SK-N-SH (cell line): ENCODE measurements at regions of chr12 and their contacts with region 1.

Region 1: GRCh38 chr12:51341259-51342007 is 5.0 kb downstream of the CELA1 start:
- DNase-seq: peak; percentile 77
- H3K4me3 ChIP-seq: peak overlapping the region in 1 of 2 experiments; percentile 36; a peak in 1 of 4 replicates
- H3K27ac ChIP-seq: no peak overlapping the region
- H3K4me1 ChIP-seq: peaks cover 4 to 5% of the 10 kb centered on the region in 2 experiments; a peak in 1 of 4 replicates
- H3K27me3 ChIP-seq: no peaks in the 10 kb centered on the region
- CTCF ChIP-seq: peak; percentile 97
- EP300 ChIP-seq: no peak
- RAD21 ChIP-seq: peak; percentile 97

Region 2: GRCh38 chr12:50763639-50764285 is 577.7 kb before region 1 on chr12 and contains the start of gene ATF1:
- CTCF ChIA-PET with region 1: interaction called, 15 read pairs
- POLR2A ChIA-PET with region 1: no interaction called
- DNase-seq: peak; percentile 95
- H3K4me3 ChIP-seq: peak within 1 kb of the TSS; percentile 71 to 73
- H3K27ac ChIP-seq: peak within 1 kb of the TSS; percentile 91 to 93
- H3K4me1 ChIP-seq: peaks cover 8 to 9% of the 10 kb centered on the region in 2 experiments; a peak in 1 of 4 replicates
- H3K27me3 ChIP-seq: no peaks in the 10 kb centered on the region
- CTCF ChIP-seq: no peak
- EP300 ChIP-seq: no peak
- RAD21 ChIP-seq: no peak
- polyA plus RNA-seq, gene ATF1: 25.0 and 34.2 TPM in 2 replicates

Region 3: DNA sequence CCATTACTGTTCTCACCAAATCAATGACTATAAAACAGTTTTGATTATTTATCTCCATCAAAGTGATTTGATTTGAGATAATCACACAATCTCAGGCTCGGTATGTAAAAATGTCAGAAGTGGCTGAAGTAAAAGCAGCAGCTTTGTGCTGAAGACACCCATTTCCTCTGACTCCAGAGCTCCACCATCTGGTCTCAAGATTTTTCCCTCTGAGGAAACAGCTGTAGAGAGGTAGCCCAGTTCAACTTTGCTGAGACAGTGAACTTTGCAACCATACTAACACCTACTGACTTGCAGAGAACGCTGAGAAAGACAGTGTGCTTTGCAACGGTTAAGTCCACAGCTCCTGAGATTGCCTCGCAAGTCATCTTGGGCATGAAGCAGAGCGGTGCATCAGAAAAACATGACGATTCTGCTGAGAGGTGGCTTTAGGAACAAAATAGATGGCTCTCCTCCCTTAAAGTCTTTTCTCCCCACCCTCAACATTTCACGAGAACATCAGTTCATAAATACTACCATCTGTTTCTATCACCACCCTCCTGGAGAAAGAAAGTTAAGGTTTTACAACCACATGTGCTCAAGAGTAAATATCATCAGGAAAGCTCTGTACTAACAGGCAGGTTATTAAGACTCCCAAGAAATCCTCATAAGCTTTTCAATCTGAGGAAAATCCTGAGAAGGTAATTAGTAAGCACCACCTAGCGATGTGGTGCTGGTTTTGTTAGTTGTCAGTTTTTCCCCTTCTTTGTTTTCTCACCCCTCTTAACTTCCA is 354.3 kb before region 1 on chr12:
- CTCF ChIA-PET with region 1: interaction called, 19 read pairs
- POLR2A ChIA-PET with region 1: no interaction called
- DNase-seq: peak; percentile 44
- H3K4me3 ChIP-seq: no peak overlapping the region
- H3K27ac ChIP-seq: no peak overlapping the region
- H3K4me1 ChIP-seq: peaks cover 2 to 11% of the 10 kb centered on the region in 2 experiments; a peak in 1 of 4 replicates
- H3K27me3 ChIP-seq: no peaks in the 10 kb centered on the region
- CTCF ChIP-seq: peak; percentile 68
- EP300 ChIP-seq: no peak
- RAD21 ChIP-seq: peak; percentile 89

Region 4: DNA sequence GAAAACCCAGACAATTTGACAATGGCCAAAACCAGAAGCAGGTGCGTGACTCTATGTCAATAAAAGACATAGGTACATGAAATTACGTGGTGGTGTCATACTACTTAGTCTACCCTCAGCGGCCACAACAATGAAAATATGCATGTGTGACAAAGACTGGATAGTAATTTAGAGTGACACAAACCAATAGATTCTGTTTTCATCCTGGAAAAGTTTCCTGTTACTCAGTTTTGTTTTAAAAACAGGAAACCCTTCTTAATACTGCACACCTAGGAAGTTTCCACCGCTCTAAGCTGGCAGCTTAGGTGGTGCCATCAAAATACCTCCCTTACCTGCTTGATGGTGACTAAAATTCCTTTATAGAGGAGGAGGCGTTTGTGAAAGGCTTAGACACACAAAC is 138.7 kb before region 1 on chr12:
- CTCF ChIA-PET with region 1: no interaction called
- POLR2A ChIA-PET with region 1: no interaction called
- DNase-seq: no peak
- H3K4me3 ChIP-seq: no peak overlapping the region
- H3K27ac ChIP-seq: no peak overlapping the region
- H3K4me1 ChIP-seq: no peaks in the 10 kb centered on the region
- H3K27me3 ChIP-seq: no peaks in the 10 kb centered on the region
- CTCF ChIP-seq: no peak
- EP300 ChIP-seq: no peak
- RAD21 ChIP-seq: no peak

Region 5: GRCh38 chr12:51270067-51270970 is 71.1 kb before region 1 on chr12 and contains the start of gene SMAGP:
- CTCF ChIA-PET with region 1: interaction called, 51 read pairs
- POLR2A ChIA-PET with region 1: no interaction called
- DNase-seq: peak; percentile 81
- H3K4me3 ChIP-seq: peak within 1 kb of the TSS; percentile 60 to 86
- H3K27ac ChIP-seq: peak within 1 kb of the TSS in 1 of 2 experiments; percentile 93; a peak in 2 of 4 replicates
- H3K4me1 ChIP-seq: peaks cover 0 to 2% of the 10 kb centered on the region in 2 experiments; a peak in 1 of 4 replicates
- H3K27me3 ChIP-seq: no peaks in the 10 kb centered on the region
- CTCF ChIP-seq: no peak
- EP300 ChIP-seq: 0 out of 4 replicates have a peak, but pooled peaks of 1 of the 2 experiments have one; percentile 5
- RAD21 ChIP-seq: no peak
- polyA plus RNA-seq, gene SMAGP: 22.6 and 26.3 TPM in 2 replicates

Region 6: DNA sequence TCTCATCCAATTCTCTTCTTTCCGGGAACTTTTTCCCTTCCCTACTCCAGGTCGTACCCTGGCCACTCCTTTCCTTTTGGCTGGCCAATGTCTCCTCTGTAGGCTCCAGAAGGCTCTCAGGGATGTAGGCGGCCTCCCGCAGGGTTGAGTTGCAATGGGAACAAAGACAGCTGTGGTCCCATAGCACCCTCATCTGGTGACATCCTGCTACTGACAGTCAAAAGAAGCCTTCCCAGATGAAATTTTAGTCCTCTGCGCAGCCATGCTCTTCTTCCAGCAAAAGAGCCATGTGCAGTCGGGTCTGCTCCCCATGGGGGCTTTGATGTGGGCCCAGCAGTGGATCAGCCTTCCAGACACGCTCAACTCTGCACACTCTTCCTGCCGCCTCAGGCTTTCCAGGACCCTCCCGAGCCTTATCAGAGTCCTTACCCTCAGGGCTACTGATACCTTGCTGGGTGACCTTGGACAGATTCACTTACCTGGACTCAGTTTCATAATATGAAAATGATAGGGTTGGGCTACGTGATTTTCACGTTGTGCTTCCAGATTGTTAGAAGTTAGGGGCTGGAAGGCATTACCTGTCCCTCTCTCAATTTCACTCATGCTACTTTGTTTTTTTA is 10.6 kb after region 1 on chr12:
- CTCF ChIA-PET with region 1: interaction called, 65 read pairs
- POLR2A ChIA-PET with region 1: no interaction called
- DNase-seq: peak; percentile 38
- H3K4me3 ChIP-seq: no peak overlapping the region
- H3K27ac ChIP-seq: no peak overlapping the region
- H3K4me1 ChIP-seq: no peaks in the 10 kb centered on the region; a peak in 1 of 4 replicates
- H3K27me3 ChIP-seq: no peaks in the 10 kb centered on the region
- CTCF ChIP-seq: peak; percentile 58
- EP300 ChIP-seq: no peak
- RAD21 ChIP-seq: peak; percentile 62

Region 7: GRCh38 chr12:51430231-51430906 is 88.9 kb after region 1 on chr12:
- CTCF ChIA-PET with region 1: no interaction called
- POLR2A ChIA-PET with region 1: no interaction called
- DNase-seq: no peak
- H3K4me3 ChIP-seq: no peak overlapping the region
- H3K27ac ChIP-seq: no peak overlapping the region
- H3K4me1 ChIP-seq: peaks cover 0 to 23% of the 10 kb centered on the region in 2 experiments; a peak in 2 of 4 replicates
- H3K27me3 ChIP-seq: no peaks in the 10 kb centered on the region
- CTCF ChIP-seq: no peak
- EP300 ChIP-seq: no peak
- RAD21 ChIP-seq: no peak